ENCODE measurements at regions of chr9 and their contacts with region 1.

Region 1: DNA sequence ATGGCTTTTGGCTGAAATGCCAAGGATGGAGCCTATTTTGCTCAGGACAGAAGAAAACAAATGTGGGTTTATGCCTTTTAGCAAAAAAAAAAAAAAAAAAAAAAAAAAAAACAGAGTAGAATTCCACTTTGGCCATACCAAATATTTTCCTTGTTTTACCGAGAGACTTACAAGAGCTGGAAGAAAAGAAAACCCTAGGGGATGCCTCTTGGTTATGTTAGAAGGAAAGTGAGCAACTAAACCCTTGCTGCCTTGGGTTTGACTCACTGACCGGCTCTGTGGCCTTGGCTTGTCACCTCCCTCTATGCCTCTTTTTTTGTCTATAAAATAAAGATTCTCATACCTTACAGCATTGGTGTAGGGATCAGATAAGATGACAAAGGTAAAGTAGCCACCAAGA is 69.6 kb upstream of the ABCA1 start:
- DNase-seq: no peak
- ATAC-seq: no peak

Region 2: GRCh38 chr9:104903609-104904008 is 93.9 kb before region 1 on chr9:
- intact Hi-C with region 1: no loop called
- DNase-seq: no peak
- ATAC-seq: peak in 1 of 2 donors; percentile 19

Region 3: GRCh38 chr9:105064315-105065097 is 67.0 kb after region 1 on chr9:
- intact Hi-C with region 1: loop called in 1 of 2 experiments (anchors 5 kb)
- DNase-seq: peak; percentile 92
- ATAC-seq: peak; percentile 96 to 97

Region 4: DNA sequence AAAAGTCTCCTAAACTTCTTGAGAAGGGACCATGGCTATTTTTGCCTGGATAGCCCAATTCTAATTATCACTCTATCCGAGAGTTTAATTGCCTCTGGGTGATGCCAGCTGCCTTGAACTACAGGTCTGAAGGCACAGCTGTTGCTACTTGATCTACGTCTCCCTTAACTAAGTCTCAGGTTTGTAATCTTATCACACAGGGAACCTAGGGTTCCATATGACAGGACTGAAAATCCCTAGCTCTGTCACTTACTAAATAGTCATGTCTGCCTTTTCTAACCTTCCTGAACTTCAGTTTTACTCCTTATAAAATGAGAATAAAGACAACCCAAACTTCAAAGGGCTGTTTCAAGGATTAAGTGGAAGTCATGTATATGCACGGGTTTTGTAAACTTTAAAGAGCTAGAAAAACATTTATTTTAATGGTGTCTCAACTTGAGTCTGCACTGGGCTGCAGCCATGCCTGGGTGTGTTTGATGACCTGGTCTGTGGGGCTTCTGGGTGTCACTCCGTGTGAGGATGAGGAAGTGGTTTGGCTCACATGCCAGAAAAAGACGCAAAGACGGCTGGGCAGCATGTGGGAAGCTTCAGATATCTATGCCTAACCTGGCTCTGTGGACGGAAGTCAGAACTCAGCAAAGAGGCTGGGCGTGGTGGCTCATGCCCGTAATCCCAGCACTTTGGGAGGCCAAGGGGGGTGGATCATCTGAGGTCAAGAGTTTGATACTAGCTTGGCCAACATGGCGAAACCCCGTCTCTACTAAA is 117.6 kb after region 1 on chr9:
- intact Hi-C with region 1: no loop called
- DNase-seq: peak; percentile 34
- ATAC-seq: peak in 1 of 2 donors; percentile 76